ENCODE measurements at regions of chr16 and their contacts with region 1.

Region 1: DNA sequence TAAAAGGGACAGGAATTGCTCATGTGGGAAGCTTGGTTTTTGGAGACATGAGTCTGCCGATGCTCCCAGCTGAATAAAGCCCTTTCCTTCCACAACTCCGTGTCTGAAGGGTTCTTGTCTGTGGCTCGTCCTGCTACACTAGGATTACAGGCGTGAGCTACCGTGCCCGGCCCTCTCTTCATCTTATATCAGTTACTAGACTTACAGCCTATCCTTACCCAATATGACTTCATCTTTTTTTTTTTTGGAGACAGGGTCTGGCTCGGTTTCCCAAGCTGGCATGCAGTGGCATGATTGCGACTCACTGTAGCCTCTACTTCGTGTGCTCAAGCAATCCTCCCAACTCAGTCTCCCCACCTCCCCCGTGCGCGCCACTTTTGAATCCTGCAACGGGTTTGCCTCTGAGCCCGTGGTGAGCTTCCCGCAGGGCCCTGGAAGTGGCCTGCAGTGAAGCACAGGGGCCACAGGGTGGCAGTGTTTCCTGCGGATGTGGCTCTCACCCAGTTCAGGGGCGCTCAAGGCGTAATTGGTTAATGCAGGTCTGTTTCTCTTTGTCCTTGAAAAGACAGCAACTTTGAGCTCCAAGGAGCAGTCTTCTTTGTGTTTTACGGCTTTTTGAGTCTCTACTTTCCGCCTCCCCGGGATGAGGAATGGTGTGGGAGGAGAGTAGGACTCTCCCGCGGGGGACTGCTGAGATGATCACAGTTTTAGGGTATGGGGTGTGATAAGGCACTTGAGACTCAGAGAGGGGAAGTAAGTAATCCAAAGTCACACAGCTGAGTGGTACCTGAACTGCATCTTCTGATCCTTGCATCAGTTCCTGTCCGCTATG is 22.7 kb upstream of the GPRC5B start:
- DNase-seq: peak; percentile 47 to 67
- H3K4me3 ChIP-seq: no peak overlapping the region
- H3K27ac ChIP-seq: no peak overlapping the region
- H3K4me1 ChIP-seq: no peaks in the 10 kb centered on the region
- H3K27me3 ChIP-seq: peaks cover 0 to 29% of the 10 kb centered on the region in 2 donors
- CTCF ChIP-seq: peak; percentile 69 to 82

Region 2: DNA sequence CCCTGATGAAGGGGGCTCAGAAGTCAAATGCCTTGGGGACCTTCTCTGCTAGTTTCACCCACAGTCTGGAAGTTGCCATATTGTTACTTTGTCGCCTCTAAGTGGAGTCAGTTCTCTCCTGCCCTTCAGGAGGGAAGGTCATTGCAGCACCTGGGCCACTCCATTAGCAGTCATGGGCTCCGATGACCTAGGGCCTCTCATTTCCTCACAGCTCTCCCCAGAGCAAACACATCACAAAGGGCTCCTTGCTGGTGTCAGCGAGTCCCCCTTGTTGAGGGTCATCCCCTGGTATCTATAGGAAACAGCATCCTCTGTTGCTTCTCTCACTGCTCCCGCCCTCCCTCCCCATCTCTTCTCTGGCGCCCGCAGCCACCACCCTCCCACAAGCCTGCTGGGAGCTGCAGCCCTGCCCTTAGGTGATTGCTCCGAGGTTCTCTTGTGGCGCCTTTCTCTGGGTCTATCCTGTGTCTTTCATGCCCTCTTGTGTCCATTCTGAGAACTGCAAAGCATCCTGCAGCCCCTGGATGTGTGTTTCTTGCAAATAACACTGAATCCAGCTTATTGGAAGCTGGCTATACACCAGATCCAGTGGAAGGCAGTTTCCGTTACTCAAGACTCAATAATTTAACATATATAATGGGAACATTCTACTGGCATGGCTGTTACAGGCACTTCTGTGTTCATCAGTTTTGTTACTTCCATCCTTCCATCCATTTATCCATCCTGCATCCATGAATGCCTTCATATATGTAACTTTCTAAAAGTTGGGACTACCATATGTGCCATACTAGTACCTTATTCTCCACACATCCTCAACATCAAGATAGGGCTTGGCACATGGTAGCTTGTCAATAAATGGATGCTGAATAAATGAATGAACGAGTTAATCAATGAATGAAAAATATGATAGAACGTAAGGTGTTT is 476.0 kb after region 1 on chr16:
- intact Hi-C with region 1: loop called (anchors 10 kb)
- DNase-seq: peak in 1 of 2 donors; percentile 53
- H3K4me3 ChIP-seq: no peak overlapping the region
- H3K27ac ChIP-seq: no peak overlapping the region
- H3K4me1 ChIP-seq: peaks cover 0 to 8% (median 2%) of the 10 kb centered on the region in 4 donors
- H3K27me3 ChIP-seq: peaks cover 0 to 17% of the 10 kb centered on the region in 2 donors
- CTCF ChIP-seq: peak; percentile 73 to 88

Region 3: GRCh38 chr16:20735490-20735889 is 828.1 kb after region 1 on chr16:
- intact Hi-C with region 1: no loop called
- DNase-seq: no peak
- H3K4me3 ChIP-seq: no peak overlapping the region
- H3K27ac ChIP-seq: no peak overlapping the region
- H3K4me1 ChIP-seq: peaks cover 0 to 53% (median 10%) of the 10 kb centered on the region in 4 donors
- H3K27me3 ChIP-seq: no peaks in the 10 kb centered on the region
- CTCF ChIP-seq: no peak

Measured in tibial artery (tissue), 4 donors.